MCF 10A (cell line): ENCODE measurements at regions of chr5 and their contacts with region 1.

Region 1: DNA sequence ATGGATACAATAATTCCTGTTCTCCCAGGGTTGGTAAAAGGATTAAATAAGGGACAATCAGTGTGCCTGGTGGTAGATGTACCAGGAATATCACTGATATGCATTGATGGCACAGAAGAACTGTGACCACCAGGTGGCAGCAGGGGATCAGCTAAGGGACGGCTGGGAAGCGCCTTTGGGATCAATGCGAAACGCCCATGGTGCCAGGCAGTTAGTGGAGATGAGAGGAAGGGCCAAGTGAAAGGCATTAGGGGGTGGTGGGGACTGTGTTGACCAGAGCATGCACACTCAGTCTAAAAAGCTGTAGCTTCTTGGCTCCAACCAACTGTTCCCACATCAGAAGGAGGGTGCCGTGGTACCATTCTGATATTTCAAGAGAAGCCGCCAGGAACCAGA is 55.6 kb downstream of the ARHGEF37 start:
- DNase-seq: peak; percentile 90
- H3K4me3 Mint-ChIP-seq: no peak overlapping the region
- H3K27ac Mint-ChIP-seq: no peak overlapping the region
- H3K4me1 Mint-ChIP-seq: peaks cover 47% of the 10 kb centered on the region
- H3K27me3 Mint-ChIP-seq: no peaks in the 10 kb centered on the region
- CTCF ChIP-seq: peak; percentile 98

Region 2: DNA sequence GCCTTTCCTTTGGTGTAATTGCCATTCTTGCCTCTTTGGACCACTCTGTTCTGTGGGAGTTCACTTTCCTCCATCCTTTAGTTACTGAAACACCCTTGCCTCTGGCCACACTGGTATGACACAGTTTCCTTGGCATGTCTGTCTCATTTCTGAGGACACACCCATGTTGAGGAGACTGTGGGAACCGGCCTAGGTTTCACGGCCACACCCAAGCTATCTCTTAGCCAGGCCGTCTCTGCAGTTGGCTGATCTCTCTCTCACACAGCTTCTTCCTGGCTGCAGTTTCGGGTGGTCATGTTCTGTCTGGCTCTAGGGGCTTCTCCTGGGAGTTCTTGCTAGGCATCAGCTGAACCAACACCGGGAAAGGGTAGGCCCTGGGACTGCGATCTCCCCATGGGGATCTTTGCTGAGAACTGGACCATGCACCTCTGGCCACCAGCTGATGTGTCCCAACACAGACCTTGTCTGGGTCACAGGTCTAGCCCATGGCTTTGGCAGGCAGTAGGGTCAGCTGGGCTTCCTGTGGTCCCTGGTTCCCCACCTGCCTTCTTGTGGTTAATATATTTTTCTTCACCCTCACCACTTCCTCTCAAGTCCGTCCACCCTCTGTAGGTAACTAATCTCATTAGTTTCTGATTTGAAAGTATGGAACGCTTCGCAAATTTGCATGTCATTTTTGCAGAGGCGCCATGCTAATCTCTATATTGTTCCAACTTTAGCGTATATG is 30.7 kb before region 1 on chr5:
- CTCF ChIA-PET with region 1: interaction called, 34 read pairs
- POLR2A ChIA-PET with region 1: interaction called, 30 read pairs
- intact Hi-C with region 1: no loop called
- DNase-seq: peak; percentile 99
- H3K4me3 Mint-ChIP-seq: no peak overlapping the region
- H3K27ac Mint-ChIP-seq: peak overlapping the region; percentile 91
- H3K4me1 Mint-ChIP-seq: peaks cover 48% of the 10 kb centered on the region
- H3K27me3 Mint-ChIP-seq: no peaks in the 10 kb centered on the region
- CTCF ChIP-seq: no peak

Region 3: DNA sequence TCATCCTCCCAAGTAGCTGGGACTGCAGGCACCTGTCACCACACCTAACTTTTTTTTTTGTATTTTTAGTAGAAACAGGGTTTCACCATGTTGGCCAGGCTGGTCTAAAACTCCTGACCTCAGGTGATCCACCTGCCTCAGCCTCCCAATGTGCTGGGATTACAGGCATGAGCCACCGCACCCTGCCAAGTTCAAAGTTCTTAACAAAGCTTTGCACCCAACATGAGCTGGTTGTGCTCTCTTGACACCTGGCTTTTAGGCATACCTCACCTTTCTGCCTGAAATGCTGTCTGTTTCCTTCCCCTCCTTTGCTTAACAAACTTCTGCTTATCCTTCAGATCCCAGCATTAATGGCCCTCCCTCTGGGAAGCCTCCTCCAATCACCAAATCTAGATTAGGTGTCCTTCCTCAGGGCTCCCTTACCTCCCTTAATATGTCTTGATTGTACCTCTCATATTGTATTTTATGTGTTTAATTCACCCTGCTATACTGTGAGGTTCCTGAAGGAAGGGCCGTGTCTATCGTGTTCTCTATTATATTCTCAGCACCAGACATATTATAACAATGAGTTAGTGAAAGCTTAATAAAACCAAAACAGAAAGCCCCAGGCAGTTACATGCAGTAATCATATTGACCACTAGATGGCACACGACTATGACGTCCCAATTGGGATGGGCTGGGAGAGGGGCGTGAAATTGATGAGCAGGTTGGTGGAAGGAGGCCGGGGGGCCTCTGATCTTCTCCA is 30.4 kb after region 1 on chr5:
- CTCF ChIA-PET with region 1: interaction called, 12 read pairs
- POLR2A ChIA-PET with region 1: interaction called, 4 read pairs
- intact Hi-C with region 1: no loop called
- DNase-seq: peak; percentile 66
- H3K4me3 Mint-ChIP-seq: no peak overlapping the region
- H3K27ac Mint-ChIP-seq: no peak overlapping the region
- H3K4me1 Mint-ChIP-seq: peaks cover 8% of the 10 kb centered on the region
- H3K27me3 Mint-ChIP-seq: no peaks in the 10 kb centered on the region
- CTCF ChIP-seq: peak; percentile 96

Region 4: DNA sequence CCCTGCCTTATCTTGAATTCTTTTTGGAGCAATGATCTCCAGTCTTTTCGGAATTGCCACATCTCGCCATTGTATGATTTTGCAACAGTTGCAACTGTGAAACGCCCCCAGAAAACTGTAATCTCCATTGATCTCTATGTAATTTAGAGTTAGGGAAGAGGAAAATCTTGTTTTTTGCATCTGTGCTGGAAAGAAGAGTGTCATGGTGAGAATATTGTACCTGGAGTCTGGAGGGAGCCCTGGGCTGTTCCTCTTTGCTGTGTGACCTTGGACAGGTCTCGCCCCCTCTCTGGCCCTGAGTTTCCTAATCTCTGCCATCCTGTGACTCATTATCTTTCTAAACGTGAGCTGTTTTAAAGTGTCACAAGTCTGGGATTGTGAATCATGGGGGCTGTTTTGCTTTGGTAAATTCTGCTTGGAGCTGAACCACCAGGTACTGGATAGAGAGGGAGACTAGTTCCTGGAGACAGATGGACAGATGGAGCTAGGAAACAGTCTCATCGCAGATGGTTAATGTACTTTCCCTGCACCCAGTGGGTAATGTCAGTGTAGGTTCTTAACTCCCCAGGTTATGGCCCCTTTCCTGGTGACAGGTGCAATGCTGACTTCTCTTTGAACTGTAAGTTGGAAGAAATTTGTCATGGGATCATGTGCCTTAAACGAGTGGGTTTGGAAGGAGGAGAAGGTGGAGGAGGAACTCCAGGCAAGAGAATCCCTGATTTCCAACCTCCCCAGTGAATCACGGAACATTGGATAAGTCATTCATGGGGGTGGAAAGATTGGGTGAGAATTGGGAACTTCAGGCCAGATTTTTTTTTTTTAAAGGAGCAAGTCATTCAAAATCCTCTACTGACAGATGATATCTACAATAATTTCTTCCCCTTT is 112.9 kb after region 1 on chr5:
- CTCF ChIA-PET with region 1: interaction called, 7 read pairs
- POLR2A ChIA-PET with region 1: interaction called, 14 read pairs
- intact Hi-C with region 1: no loop called
- DNase-seq: peak; percentile 90
- H3K4me3 Mint-ChIP-seq: peak overlapping the region; percentile 45
- H3K27ac Mint-ChIP-seq: peak overlapping the region; percentile 63
- H3K4me1 Mint-ChIP-seq: peaks cover 64% of the 10 kb centered on the region
- H3K27me3 Mint-ChIP-seq: no peaks in the 10 kb centered on the region
- CTCF ChIP-seq: no peak

Region 5: GRCh38 chr5:149828161-149828884 is 191.5 kb after region 1 on chr5:
- CTCF ChIA-PET with region 1: interaction called, 300 read pairs
- POLR2A ChIA-PET with region 1: interaction called, 26 read pairs
- intact Hi-C with region 1: loop called (anchors 1 kb)
- DNase-seq: peak; percentile 99
- H3K4me3 Mint-ChIP-seq: no peak overlapping the region
- H3K27ac Mint-ChIP-seq: peak overlapping the region; percentile 57
- H3K4me1 Mint-ChIP-seq: peaks cover 12% of the 10 kb centered on the region
- H3K27me3 Mint-ChIP-seq: no peaks in the 10 kb centered on the region
- CTCF ChIP-seq: peak; percentile 96

Region 6: GRCh38 chr5:150112261-150113046 is 475.6 kb after region 1 on chr5:
- CTCF ChIA-PET with region 1: no interaction called
- POLR2A ChIA-PET with region 1: no interaction called
- intact Hi-C with region 1: loop called (anchors 10 kb)
- DNase-seq: peak; percentile 93
- H3K4me3 Mint-ChIP-seq: no peak overlapping the region
- H3K27ac Mint-ChIP-seq: peak overlapping the region; percentile 46
- H3K4me1 Mint-ChIP-seq: peaks cover 47% of the 10 kb centered on the region
- H3K27me3 Mint-ChIP-seq: no peaks in the 10 kb centered on the region
- CTCF ChIP-seq: no peak

Region 7: GRCh38 chr5:150138551-150139265 is 501.9 kb after region 1 on chr5:
- CTCF ChIA-PET with region 1: no interaction called
- POLR2A ChIA-PET with region 1: no interaction called
- intact Hi-C with region 1: no loop called
- DNase-seq: peak; percentile 66
- H3K4me3 Mint-ChIP-seq: no peak overlapping the region
- H3K27ac Mint-ChIP-seq: peak overlapping the region; percentile 10
- H3K4me1 Mint-ChIP-seq: peaks cover 40% of the 10 kb centered on the region
- H3K27me3 Mint-ChIP-seq: no peaks in the 10 kb centered on the region
- CTCF ChIP-seq: no peak